Activated CD4-positive, alpha-beta T cell treated with anti-CD3 and anti-CD28 coated beads for 36 hours (primary cell): ENCODE measurements at regions of chr17 and their contacts with region 1.

Region 1: GRCh38 chr17:74601944-74602572 is 10.0 kb upstream of the CD300LD start:
- DNase-seq: peak; percentile 64
- ATAC-seq: peak; percentile 52
- H3K4me3 Mint-ChIP-seq: no peak overlapping the region
- H3K27ac Mint-ChIP-seq: no peak overlapping the region
- H3K4me1 Mint-ChIP-seq: peaks cover 35% of the 10 kb centered on the region
- H3K27me3 Mint-ChIP-seq: peaks cover 2% of the 10 kb centered on the region

Region 2: DNA sequence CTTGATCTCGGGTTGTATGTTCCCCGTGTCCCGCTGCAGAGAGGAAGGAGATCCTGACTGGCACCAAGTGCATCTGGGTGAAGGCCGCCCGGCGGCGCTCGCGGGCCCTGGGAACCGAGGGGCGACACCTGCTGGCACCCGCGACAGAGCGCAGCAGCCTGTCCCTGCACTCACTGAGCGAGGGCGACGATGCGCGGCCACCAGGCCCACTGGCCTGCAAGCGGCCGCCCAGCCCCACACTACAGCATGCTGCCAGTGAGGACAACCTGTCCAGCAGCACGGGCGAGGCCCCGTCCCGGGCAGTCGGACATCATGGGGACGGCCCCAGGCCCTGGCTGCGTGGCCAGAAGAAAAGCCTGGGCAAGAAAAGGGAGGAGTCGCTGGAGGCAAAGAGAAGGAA is 247.9 kb before region 1 on chr17:
- CTCF ChIA-PET with region 1: no interaction called
- POLR2A ChIA-PET with region 1: no interaction called
- intact Hi-C with region 1: no loop called
- DNase-seq: peak; percentile 88
- ATAC-seq: peak; percentile 90
- H3K4me3 Mint-ChIP-seq: no peak overlapping the region
- H3K27ac Mint-ChIP-seq: no peak overlapping the region
- H3K4me1 Mint-ChIP-seq: no peaks in the 10 kb centered on the region
- H3K27me3 Mint-ChIP-seq: peaks cover 53% of the 10 kb centered on the region

Region 3: DNA sequence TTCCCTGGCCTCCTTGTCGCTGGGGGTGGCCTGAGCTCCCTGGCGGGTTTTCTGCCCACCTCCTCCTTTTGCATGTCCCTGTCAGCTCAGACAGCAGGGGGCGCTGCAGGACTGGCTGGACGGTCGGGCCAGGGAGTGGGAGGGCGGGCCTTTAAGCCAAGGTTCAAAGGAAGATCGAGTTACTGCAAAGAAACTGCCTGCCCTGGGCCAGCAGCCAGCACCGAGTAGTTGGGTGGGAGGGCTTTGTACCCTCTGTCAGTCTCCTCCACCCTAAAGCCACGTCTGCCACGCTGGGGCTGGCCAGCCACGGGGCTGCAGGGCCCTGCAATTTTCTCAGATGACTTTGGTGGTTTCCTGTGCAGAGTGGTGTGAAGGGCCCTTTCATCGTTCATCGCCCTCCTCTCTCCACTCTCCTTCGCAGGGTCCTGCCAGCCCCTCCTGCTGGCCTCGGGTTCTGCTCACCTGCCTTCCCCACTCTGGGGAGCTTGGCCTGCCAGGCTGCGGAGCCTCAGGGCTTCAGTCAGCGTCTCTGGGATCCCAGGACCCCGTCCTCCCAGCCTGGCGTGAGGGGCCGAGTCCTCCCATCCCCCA is 222.5 kb before region 1 on chr17:
- CTCF ChIA-PET with region 1: interaction called, 6 read pairs
- POLR2A ChIA-PET with region 1: no interaction called
- intact Hi-C with region 1: loop called in 1 of 2 experiments (anchors 1 kb)
- DNase-seq: peak; percentile 97
- ATAC-seq: peak; percentile 97
- H3K4me3 Mint-ChIP-seq: no peak overlapping the region
- H3K27ac Mint-ChIP-seq: no peak overlapping the region
- H3K4me1 Mint-ChIP-seq: no peaks in the 10 kb centered on the region
- H3K27me3 Mint-ChIP-seq: no peaks in the 10 kb centered on the region

Region 4: DNA sequence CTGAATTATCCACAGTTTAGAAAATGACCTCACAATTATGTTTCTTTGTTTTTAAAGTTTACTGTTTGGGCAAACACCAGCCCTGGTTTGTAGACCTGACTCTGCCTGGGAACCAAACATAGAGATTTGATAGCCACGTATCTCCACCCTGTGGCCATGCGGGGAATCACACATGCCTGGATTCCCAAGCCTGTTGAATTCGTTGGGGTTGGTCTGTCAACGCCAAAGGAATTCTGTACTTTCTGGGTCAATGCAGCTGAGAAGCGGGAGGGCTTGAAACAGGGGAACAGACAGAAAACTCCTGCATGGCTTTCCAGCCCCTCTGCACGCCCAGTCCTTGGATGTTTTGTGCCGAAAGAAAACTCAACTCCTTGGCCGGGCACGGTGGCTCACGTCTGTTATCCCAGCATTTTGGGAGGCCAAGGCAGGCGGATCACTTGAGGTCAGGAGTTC is 108.7 kb before region 1 on chr17:
- CTCF ChIA-PET with region 1: interaction called, 3 read pairs
- POLR2A ChIA-PET with region 1: no interaction called
- intact Hi-C with region 1: loop called in 1 of 2 experiments (anchors 1 kb)
- DNase-seq: peak; percentile 80
- ATAC-seq: peak; percentile 78
- H3K4me3 Mint-ChIP-seq: no peak overlapping the region
- H3K27ac Mint-ChIP-seq: no peak overlapping the region
- H3K4me1 Mint-ChIP-seq: no peaks in the 10 kb centered on the region
- H3K27me3 Mint-ChIP-seq: no peaks in the 10 kb centered on the region

Region 5: DNA sequence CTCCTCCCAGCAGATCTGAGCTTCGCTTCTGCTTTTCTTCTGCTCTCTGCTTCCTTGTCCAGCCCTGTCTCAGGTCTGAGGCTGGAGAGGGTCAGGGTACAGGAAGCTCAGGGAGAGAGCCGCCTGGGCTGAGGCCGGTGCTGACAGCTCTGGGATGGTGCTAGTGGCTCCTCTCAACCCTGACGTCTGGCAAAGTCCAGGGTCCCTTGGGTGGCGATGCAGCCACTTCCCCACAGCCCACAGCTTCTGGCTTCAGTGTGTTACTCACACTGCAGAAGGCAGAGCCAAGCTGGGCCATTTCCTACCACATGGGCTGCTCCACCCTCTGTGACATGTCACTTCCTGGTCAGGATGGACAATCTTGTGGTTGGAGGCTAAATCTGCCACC is 56.2 kb before region 1 on chr17 and contains the start of gene CD300C:
- CTCF ChIA-PET with region 1: no interaction called
- POLR2A ChIA-PET with region 1: no interaction called
- intact Hi-C with region 1: loop called in 1 of 2 experiments (anchors 5 kb)
- DNase-seq: no peak
- ATAC-seq: no peak
- H3K4me3 Mint-ChIP-seq: no peak within 1 kb of the TSS
- H3K27ac Mint-ChIP-seq: no peak within 1 kb of the TSS
- H3K4me1 Mint-ChIP-seq: peaks cover 9% of the 10 kb centered on the region
- H3K27me3 Mint-ChIP-seq: no peaks in the 10 kb centered on the region
- total RNA-seq, gene CD300C: not detected

Region 6: DNA sequence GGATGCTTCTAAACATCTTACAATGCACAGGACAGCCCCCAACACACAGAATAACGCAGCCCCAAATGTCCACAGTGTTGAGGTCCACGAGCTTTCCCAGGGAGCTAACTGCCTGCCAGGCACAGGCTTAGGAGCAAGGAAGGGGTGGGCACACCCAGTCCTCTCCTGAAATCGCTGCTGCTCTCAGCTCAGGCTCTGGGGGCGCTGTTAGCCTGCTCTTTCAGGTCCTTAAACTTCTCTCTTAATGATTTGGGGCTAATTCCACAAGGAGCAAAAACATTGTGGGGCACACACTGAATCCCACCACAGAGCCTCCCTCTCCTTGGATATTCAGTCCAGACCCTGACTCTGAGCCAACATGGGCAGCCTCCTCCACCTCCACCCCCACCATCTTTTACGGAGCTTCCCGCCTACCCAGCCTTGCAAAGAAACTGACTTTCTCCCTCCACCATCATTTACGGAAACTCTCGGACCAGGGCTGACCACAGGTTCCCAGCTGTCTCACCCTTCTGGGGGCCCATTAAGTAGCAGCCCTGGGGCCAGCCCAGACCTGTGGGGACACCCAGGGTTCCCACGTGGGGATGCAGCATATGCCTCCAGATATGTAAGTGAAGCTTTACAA is 35.8 kb before region 1 on chr17:
- CTCF ChIA-PET with region 1: interaction called, 13 read pairs
- POLR2A ChIA-PET with region 1: no interaction called
- intact Hi-C with region 1: no loop called
- DNase-seq: peak; percentile 66
- ATAC-seq: peak; percentile 47
- H3K4me3 Mint-ChIP-seq: no peak overlapping the region
- H3K27ac Mint-ChIP-seq: no peak overlapping the region
- H3K4me1 Mint-ChIP-seq: peaks cover 23% of the 10 kb centered on the region
- H3K27me3 Mint-ChIP-seq: peaks cover 8% of the 10 kb centered on the region

Region 7: GRCh38 chr17:74770498-74771318 is 168.7 kb after region 1 on chr17:
- CTCF ChIA-PET with region 1: no interaction called
- POLR2A ChIA-PET with region 1: interaction called, 11 read pairs
- intact Hi-C with region 1: no loop called
- DNase-seq: peak; percentile 84
- ATAC-seq: peak; percentile 93
- H3K4me3 Mint-ChIP-seq: no peak overlapping the region
- H3K27ac Mint-ChIP-seq: peak overlapping the region; percentile 60
- H3K4me1 Mint-ChIP-seq: peaks cover 23% of the 10 kb centered on the region
- H3K27me3 Mint-ChIP-seq: no peaks in the 10 kb centered on the region